Posterior vena cava (tissue), 2 donors: ENCODE measurements at regions of chr12 and their contacts with region 1.

Region 1: DNA sequence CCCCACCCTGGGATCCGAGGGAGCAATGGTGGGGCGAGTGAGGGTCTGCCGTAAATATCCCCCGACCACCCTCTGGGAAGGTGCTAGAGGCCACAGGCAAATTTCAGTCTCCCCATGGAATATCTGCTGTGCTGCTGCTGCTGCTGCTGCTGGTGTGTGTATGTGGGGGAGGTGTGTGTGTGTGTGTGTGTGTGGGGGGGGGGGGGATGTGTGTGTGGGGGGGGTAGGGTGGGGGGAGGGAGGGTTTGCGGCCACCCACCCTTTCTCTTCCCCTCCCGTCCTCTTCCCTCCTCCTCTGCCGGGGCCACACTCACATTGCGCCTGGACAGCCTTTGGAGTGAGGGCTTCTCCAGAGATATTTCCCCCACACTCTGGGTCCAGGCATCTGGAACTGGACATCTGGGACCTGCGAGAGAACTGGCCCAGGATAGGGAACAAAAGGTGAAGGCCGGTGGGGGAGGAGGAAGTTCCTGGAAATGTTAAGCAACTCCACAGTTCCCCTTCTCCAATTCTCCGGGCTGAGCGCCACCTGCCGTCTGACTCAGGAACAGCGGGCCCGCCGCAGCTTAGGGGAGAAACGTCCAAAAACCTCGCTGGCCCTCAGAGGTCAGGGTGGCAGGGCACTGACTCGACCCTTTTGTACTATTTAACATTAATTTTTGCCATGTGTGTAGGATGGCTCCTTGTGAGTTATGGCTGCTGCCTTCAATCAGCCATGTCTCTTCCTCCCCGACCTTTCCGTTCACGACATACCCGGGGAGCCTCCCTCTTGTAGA is at the start of gene C1RL:
- DNase-seq: peak; percentile 98
- total RNA-seq, gene C1RL: 79.5 to 122 TPM

Region 2: GRCh38 chr12:6662906-6663742 is 445.9 kb before region 1 on chr12 and contains the start of gene ING4:
- intact Hi-C with region 1: loop called in 1 of 2 experiments (anchors 5 kb)
- DNase-seq: peak; percentile 99
- total RNA-seq, gene ING4: 23.0 to 25.9 TPM

Region 3: GRCh38 chr12:6953442-6954315 is 155.3 kb before region 1 on chr12:
- intact Hi-C with region 1: loop called in 1 of 2 experiments (anchors 10 kb)
- DNase-seq: peak; percentile 90

Region 4: DNA sequence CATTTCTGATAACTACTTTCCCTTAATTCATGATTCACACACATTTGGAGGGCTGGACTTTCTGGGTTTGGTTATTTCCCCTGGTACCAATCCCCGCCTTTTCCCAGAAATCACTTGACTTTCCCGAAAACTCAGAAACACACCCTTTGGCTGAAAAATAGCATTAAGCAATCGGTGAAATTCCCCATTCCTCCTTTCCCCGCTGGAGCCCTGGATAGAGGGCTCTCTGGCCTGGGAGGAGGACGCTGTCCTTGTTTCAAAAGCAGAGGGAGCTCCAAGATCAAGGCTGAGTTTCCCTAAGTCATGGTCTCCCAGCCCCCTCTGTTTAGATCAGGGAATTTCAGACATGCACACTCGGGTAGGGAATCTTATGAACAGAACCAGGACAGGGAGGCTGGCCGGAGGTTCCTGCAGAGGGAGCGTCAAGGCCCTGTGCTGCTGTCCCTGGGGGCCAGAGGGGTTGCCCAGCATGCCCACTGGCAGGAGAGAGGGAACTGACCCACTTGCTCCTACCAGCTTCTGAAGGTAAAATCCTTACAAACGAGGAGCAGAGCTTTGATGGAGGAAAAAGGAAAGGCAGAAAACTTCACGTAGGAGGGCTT is 48.5 kb before region 1 on chr12 and contains the start of gene C1S:
- intact Hi-C with region 1: loop called (anchors 5 to 10 kb)
- DNase-seq: peak; percentile 87
- total RNA-seq, gene C1S: 585 to 986 TPM

Region 5: DNA sequence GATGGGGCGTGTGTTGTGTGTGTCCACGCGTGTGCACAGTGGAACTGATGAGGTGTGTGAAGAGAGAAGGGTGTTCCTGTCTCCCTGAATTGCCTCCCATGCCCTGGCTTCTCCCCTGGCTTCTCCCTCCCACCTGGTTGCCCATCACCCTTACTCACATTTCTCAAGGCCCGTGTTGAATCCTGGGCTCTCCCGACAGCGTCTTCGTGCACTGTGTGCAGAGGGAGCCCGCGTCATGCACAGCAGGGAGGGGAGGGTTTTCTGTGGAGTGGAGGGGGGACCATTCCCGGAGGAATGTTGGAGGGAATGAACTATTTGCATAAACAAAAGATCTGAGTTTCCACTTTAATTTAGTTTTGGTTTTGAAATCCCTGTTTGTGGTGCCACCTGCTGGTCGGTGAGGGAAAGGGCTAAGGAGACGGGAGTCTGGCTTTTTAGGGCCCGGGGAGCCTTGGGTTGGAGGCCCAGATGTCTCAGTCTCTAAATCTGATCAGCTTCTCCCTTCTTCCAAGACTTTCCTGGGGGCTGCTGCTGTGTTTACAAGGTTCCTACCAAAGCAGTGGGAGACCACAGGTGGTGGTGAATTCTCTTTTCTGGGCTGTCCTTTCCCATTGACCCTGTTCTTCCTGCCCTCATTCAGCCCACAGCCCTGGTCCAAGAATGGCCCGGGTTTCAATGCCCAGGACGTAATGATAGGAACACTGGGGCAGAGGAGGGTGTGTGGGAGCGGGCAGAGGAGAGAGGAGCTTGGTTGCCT is 16.6 kb before region 1 on chr12 and contains the start of gene C1R:
- intact Hi-C with region 1: loop called in 1 of 2 experiments (anchors 1 kb)
- DNase-seq: peak; percentile 96
- total RNA-seq, gene C1R: 1,008 to 1,686 TPM

Region 6: DNA sequence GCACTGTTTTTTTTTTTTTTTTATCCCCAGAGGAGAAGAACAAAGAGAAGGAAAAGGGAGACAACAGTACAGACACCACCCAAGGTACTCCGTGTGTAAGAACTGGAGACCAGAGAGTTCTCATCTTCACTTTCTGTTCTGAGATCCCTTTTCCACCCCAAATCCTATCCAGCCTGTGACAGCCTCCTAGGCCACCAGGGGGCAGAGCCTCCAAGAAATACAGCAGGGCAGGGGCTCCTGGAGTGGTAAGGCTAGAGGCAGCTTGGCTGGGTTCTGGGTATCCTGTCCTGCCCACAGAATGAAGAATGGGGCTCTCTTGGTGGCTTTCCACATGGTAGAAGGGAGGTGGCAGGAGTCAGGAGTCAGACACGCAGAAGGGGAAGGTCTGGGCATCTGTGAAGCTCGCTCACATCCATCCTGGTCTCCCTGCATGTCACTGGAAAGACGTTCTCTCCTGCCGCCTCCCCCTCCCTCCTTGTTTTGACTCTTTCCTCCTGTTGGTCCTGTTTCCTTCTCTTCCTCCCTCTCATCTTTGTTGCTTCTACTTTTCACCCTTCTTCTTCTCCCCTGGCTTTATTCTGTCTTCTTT is 33.2 kb after region 1 on chr12:
- intact Hi-C with region 1: no loop called
- DNase-seq: peak; percentile 80

Region 7: DNA sequence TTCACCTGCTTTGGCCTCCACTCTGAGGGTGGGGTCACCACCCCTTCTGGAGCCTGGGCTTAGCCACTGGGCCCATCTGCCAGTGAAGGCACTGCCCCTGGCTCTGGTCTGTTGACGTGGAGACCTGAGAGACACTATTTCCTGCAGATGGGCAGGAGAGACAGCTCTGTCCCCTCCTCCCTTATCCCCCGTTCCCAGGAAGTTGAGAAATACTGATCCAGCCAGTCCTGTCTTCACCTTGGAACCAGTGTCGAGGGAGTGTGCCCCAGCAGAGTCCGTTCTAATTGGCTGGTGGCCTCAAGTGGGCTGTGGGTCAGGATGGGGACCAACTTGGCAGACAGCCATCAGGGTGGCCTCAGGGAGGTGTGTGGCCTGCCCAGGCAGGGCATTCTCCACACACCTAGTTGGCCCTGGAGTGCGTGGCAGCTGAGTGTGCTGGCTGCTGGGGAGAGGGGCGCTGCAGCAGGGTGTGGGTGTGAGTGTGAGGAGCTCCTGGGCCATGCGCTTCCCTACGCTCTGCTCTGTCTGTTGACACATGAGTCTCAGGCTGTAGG is 46.6 kb after region 1 on chr12:
- intact Hi-C with region 1: no loop called
- DNase-seq: no peak